ENCODE measurements at regions of chr22 and their contacts with region 1.

Region 1: GRCh38 chr22:19854778-19855503 is at the starts of genes GNB1L and RTL10:
- DNase-seq: peak; percentile 94 to 97
- ATAC-seq: peak; percentile 91
- H3K4me3 ChIP-seq: peak within 1 kb of the TSS; percentile 85 to 98 (median 94)
- H3K27ac ChIP-seq: peak within 1 kb of the TSS; percentile 91 to 98 (median 96)
- H3K4me1 ChIP-seq: peaks cover 20 to 31% of the 10 kb centered on the region in 2 donors
- H3K27me3 ChIP-seq: no peaks in the 10 kb centered on the region
- CTCF ChIP-seq: no peak
- POLR2A ChIP-seq: peak; percentile 96 to 98
- total RNA-seq, gene GNB1L: 4.4 to 9.6 (median 6.7) TPM
- total RNA-seq, gene RTL10: 3.5 to 12.8 (median 5.0) TPM

Region 2: GRCh38 chr22:19730655-19731360 is 124.1 kb before region 1 on chr22:
- in situ Hi-C with region 1: no loop called
- intact Hi-C with region 1: loop called (anchors 5 kb)
- DNase-seq: peak; percentile 65 to 73
- ATAC-seq: peak; percentile 86 to 92
- H3K4me3 ChIP-seq: peak overlapping the region; percentile 44 to 53 (median 48)
- H3K27ac ChIP-seq: no peak overlapping the region
- H3K4me1 ChIP-seq: no peaks in the 10 kb centered on the region
- H3K27me3 ChIP-seq: no peaks in the 10 kb centered on the region
- CTCF ChIP-seq: peak; percentile 95 to 99 (median 98)
- POLR2A ChIP-seq: no peak

Region 3: GRCh38 chr22:19745155-19746101 is 109.5 kb before region 1 on chr22:
- in situ Hi-C with region 1: no loop called
- intact Hi-C with region 1: loop called (anchors 5 kb)
- DNase-seq: peak; percentile 97 to 99
- ATAC-seq: peak; percentile 86 to 88
- H3K4me3 ChIP-seq: peak overlapping the region in 1 of 4 donors; percentile 2
- H3K27ac ChIP-seq: peak overlapping the region; percentile 85 to 98 (median 90)
- H3K4me1 ChIP-seq: peaks cover 19 to 36% of the 10 kb centered on the region in 2 donors
- H3K27me3 ChIP-seq: no peaks in the 10 kb centered on the region
- CTCF ChIP-seq: peak in 1 of 5 experiments; percentile 47
- POLR2A ChIP-seq: peak; percentile 55 to 57

Region 4: GRCh38 chr22:19761500-19762314 is 93.2 kb before region 1 on chr22:
- in situ Hi-C with region 1: no loop called
- intact Hi-C with region 1: loop called (anchors 1 kb)
- DNase-seq: no peak
- ATAC-seq: peak; percentile 17 to 29
- H3K4me3 ChIP-seq: peak overlapping the region; percentile 51 to 54 (median 53)
- H3K27ac ChIP-seq: peak overlapping the region; percentile 79 to 81 (median 80)
- H3K4me1 ChIP-seq: peaks cover 0 to 4% of the 10 kb centered on the region in 2 donors
- H3K27me3 ChIP-seq: peaks cover 10 to 36% (median 10%) of the 10 kb centered on the region in 3 donors
- CTCF ChIP-seq: no peak
- POLR2A ChIP-seq: peak in 1 of 2 donors; percentile 16

Region 5: DNA sequence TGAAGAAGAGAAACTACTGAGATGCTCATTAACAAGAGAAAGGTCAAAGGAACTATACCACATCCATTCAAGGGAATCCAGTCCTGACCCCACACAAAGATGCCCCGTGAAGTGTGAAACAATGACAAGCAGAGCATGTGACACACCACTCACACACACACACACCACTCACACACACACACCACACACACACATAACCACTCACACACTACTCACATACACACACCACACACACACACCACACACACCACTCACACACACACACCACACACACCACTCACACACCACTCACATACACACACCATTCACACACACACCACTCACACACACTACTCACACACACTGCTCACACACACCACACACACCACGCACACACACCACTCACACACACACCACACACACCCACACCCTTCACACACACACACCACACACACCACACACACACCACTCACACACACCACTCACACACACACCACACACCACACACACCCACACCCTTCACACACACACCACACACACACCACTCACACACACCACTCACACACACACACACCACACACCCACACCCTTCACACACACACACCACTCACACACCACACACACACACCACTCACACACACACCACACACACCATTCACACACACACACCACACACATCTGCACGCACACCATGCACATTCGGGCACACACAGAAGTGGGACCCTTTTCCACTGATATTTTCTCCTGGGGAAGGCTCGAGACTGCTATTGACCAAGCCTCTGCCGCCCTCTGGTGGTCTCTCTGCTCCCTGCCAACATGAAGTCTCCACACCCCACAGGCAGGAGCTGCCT is 54.6 kb after region 1 on chr22:
- in situ Hi-C with region 1: no loop called
- intact Hi-C with region 1: loop called (anchors 2 kb)
- DNase-seq: peak; percentile 59 to 77
- ATAC-seq: peak; percentile 93 to 94
- H3K4me3 ChIP-seq: no peak overlapping the region
- H3K27ac ChIP-seq: no peak overlapping the region
- H3K4me1 ChIP-seq: no peaks in the 10 kb centered on the region
- H3K27me3 ChIP-seq: no peaks in the 10 kb centered on the region
- CTCF ChIP-seq: peak; percentile 77 to 93 (median 87)
- POLR2A ChIP-seq: no peak

Measured in gastrocnemius medialis (tissue), 4 donors.